Mammary epithelial cell (primary cell): ENCODE measurements at regions of chr19 and their contacts with region 1.

Region 1: GRCh38 chr19:36132489-36132891 is 7.4 kb upstream of the CAPNS1 start:
- DNase-seq: peak; percentile 99
- H3K4me3 ChIP-seq: no peak overlapping the region
- H3K27ac ChIP-seq: peak overlapping the region; percentile 12
- H3K4me1 ChIP-seq: peaks cover 31% of the 10 kb centered on the region
- H3K27me3 ChIP-seq: no peaks in the 10 kb centered on the region
- CTCF ChIP-seq: no peak

Region 2: DNA sequence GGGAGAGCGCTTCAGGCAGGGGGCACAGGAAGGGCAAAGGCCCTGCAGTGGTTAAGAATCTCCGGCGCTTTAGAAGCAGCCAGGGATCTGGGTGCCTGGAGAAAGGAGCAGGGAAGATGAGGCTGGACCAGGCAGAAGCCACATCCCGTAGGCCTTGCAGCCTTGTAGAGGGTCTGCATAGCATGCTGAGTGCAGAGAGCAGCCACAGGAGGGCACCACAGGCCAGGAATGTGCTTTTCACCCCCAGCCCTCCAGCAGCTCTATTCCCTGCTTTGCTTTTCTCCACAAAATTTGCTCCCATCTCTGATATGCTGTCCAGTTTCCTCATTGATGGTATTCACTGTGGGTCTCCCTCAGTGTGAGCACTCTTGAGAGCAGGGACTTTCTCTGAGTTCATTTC is 72.1 kb before region 1 on chr19:
- CTCF ChIA-PET with region 1: no interaction called
- dilution Hi-C with region 1: no loop called
- in situ Hi-C with region 1: no loop called
- intact Hi-C with region 1: loop called (anchors 1 kb)
- DNase-seq: peak; percentile 17
- H3K4me3 ChIP-seq: no peak overlapping the region
- H3K27ac ChIP-seq: no peak overlapping the region
- H3K4me1 ChIP-seq: peaks cover 5% of the 10 kb centered on the region
- H3K27me3 ChIP-seq: no peaks in the 10 kb centered on the region
- CTCF ChIP-seq: peak; percentile 52 to 77

Region 3: DNA sequence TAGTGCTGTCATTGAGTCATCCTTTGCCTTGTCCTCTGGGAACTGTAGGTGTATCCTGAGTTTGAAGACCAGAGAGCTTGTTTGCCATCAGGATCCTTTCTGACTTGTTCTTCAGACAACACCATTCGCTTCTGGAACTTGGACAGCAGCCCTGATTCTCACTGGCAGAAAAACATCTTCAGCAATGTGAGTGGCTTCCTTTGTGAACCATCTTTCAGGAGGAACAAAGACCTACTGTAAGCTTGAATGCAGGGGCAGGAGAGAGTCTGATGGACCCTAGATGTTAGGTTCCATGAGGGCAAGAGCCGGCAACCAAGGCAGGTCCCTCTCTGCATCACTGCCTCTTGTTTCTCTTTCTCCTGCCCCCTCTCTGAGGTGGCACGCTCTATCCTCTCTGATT is 51.1 kb before region 1 on chr19:
- CTCF ChIA-PET with region 1: no interaction called
- dilution Hi-C with region 1: no loop called
- in situ Hi-C with region 1: no loop called
- intact Hi-C with region 1: no loop called
- DNase-seq: no peak
- H3K4me3 ChIP-seq: no peak overlapping the region
- H3K27ac ChIP-seq: no peak overlapping the region
- H3K4me1 ChIP-seq: no peaks in the 10 kb centered on the region
- H3K27me3 ChIP-seq: no peaks in the 10 kb centered on the region
- CTCF ChIP-seq: no peak

Region 4: GRCh38 chr19:36149673-36150406 is 17.4 kb after region 1 on chr19:
- CTCF ChIA-PET with region 1: no interaction called
- dilution Hi-C with region 1: no loop called
- in situ Hi-C with region 1: no loop called
- intact Hi-C with region 1: loop called (anchors 1 kb)
- DNase-seq: peak; percentile 86
- H3K4me3 ChIP-seq: no peak overlapping the region
- H3K27ac ChIP-seq: peak overlapping the region; percentile 25
- H3K4me1 ChIP-seq: peaks cover 23% of the 10 kb centered on the region
- H3K27me3 ChIP-seq: no peaks in the 10 kb centered on the region
- CTCF ChIP-seq: no peak

Region 5: GRCh38 chr19:36169084-36169760 is 36.7 kb after region 1 on chr19:
- CTCF ChIA-PET with region 1: interaction called, 7 read pairs
- dilution Hi-C with region 1: no loop called
- in situ Hi-C with region 1: loop called (anchors 5 kb)
- intact Hi-C with region 1: loop called (anchors 1 kb)
- DNase-seq: no peak
- H3K4me3 ChIP-seq: no peak overlapping the region
- H3K27ac ChIP-seq: no peak overlapping the region
- H3K4me1 ChIP-seq: no peaks in the 10 kb centered on the region
- H3K27me3 ChIP-seq: no peaks in the 10 kb centered on the region
- CTCF ChIP-seq: no peak

Region 6: GRCh38 chr19:37077934-37078725 is 945.6 kb after region 1 on chr19 and contains the start of gene ZNF420:
- CTCF ChIA-PET with region 1: no interaction called
- dilution Hi-C with region 1: no loop called
- in situ Hi-C with region 1: no loop called
- intact Hi-C with region 1: loop called (anchors 2 kb)
- DNase-seq: peak; percentile 94
- H3K4me3 ChIP-seq: peak within 1 kb of the TSS; percentile 74 to 91 (median 87)
- H3K27ac ChIP-seq: peak within 1 kb of the TSS; percentile 41
- H3K4me1 ChIP-seq: peaks cover 8% of the 10 kb centered on the region
- H3K27me3 ChIP-seq: no peaks in the 10 kb centered on the region
- CTCF ChIP-seq: no peak
- total RNA-seq, gene ZNF420: 4.1 to 9.0 TPM